Aorta (tissue), 5 donors: ENCODE measurements at regions of chr11 and their contacts with region 1.

Region 1: DNA sequence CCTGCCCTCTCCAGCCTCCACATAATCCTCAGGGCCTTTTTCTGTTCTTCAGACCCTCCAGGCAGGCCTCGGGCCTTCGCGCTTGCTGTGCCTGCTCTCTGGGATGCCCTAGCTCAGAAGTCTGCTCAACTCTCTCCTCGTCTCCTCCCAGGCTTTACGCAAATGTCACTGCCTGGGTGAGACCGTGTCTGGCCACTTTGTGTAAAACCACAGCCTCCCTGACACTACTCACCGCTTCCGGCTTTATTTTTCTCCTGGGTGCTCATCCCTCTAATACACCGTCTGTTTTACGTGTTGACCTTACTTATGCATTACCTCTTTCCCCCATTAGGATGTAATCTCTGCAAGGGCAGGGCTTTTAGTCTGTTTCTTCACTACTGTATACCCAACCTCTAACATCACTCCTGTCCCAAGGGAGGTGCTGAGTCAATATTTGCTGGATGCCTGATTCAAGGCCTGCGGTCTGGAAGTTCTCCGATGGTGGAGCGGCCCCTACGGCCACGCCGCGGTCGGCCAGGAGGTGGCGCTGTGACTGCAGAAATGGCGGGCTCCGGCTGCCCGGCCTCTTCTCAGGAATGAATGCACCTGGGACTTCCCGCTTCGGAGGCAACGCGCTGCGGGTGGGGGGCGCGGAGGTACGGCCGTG is 58.2 kb upstream of the THY1 start:
- DNase-seq: peak; percentile 86 to 96
- ATAC-seq: peak; percentile 84
- H3K4me3 ChIP-seq: no peak overlapping the region
- H3K27ac ChIP-seq: no peak overlapping the region
- H3K4me1 ChIP-seq: no peaks in the 10 kb centered on the region
- H3K27me3 ChIP-seq: no peaks in the 10 kb centered on the region

Region 2: GRCh38 chr11:119533921-119534736 is 53.0 kb after region 1 on chr11:
- intact Hi-C with region 1: loop called in 1 of 2 experiments (anchors 2 kb)
- DNase-seq: peak; percentile 81 to 92
- ATAC-seq: peak; percentile 60
- H3K4me3 ChIP-seq: no peak overlapping the region
- H3K27ac ChIP-seq: no peak overlapping the region
- H3K4me1 ChIP-seq: no peaks in the 10 kb centered on the region
- H3K27me3 ChIP-seq: no peaks in the 10 kb centered on the region

Region 3: DNA sequence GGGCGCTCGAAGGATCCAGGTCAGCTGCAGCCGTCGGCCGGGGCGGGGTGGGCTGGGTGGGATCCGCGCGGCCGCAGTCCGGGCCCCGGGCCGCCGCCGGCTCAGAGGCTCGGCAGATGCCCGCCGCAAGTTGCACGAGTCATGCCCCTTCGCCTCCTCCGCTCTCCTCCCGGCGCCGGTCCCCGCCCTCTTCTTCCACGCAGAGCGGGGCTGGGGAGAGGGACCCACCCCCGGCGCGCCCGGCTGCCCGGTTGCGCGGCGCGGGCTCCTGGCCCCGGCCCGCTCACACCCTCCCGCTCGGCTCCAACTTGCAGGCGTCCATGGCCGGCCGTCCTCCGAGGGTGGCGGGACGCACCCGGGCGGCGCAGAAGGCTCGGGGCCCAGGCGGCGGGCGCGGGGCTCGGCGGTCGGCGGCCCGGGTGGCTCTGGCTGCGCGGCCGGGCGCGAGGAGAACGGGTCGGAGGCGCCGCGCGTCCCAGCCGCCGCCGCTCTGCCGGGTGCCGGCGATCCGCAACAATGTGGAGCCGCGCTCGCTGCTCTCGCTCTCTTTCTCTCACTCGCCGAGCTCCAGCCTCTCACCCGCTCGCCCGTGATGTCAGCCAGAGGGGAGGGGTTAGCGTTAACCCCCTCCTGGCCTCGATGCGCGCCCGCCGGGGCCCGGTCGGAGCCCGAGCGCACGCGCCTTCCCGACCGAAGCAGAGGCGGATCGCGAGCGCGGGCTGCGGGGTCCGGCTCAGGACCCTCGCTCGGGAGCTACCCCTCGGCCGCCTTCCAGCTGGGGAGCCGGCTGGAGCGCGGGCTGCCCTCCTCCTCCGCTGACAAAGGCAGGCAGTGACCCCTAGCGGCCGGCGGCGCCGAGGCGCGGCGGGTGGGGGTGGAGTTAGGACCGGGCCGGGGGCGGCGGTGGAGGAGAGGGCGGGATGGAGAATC is 247.8 kb after region 1 on chr11 and contains the start of gene NECTIN1:
- intact Hi-C with region 1: loop called (anchors 5 to 10 kb)
- DNase-seq: peak; percentile 92 to 97
- ATAC-seq: peak; percentile 95
- H3K4me3 ChIP-seq: peak within 1 kb of the TSS; percentile 45 to 82
- H3K27ac ChIP-seq: peak within 1 kb of the TSS; percentile 29 to 49
- H3K4me1 ChIP-seq: no peaks in the 10 kb centered on the region
- H3K27me3 ChIP-seq: no peaks in the 10 kb centered on the region
- total RNA-seq, gene NECTIN1: 5.5 to 7.1 TPM

Region 4: DNA sequence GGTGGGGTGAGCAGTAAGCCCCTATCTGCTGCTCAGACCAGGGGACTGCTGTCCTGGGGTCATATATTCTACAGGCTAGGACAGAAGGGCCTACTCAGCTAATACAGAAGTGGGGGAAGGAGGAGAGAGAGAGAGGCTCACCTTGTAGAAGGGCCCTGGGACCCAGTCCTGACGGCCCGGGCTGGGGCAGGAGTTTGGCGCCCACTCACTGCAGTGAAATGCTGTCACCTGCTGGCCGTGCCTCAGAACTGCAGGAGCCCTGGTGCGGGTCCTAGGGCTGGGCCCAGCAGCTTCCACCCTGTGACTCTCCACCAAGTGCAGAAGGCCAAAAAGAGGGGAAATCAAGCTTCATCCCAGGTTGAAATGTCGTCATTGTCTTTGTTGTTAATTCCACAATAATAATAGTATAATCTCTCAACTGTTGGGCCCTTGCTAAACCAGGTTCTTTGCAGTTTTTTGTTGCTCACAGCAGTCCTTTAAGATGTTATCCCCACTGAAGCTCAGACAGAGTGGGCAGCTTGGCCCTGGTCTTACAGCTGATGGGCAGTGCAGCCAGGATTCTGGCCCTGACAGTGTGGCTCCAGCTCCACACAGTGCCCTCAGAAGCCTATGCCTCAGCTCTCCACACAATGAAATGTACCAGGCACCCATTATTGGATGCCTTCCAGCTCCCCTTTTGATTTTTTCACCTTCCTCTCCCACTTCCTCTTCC is 627.2 kb after region 1 on chr11:
- intact Hi-C with region 1: loop called (anchors 5 kb)
- DNase-seq: peak; percentile 72 to 91
- ATAC-seq: peak; percentile 84
- H3K4me3 ChIP-seq: no peak overlapping the region
- H3K27ac ChIP-seq: no peak overlapping the region
- H3K4me1 ChIP-seq: no peaks in the 10 kb centered on the region
- H3K27me3 ChIP-seq: no peaks in the 10 kb centered on the region